ENCODE measurements at regions of chr9 and their contacts with region 1.

Region 1: DNA sequence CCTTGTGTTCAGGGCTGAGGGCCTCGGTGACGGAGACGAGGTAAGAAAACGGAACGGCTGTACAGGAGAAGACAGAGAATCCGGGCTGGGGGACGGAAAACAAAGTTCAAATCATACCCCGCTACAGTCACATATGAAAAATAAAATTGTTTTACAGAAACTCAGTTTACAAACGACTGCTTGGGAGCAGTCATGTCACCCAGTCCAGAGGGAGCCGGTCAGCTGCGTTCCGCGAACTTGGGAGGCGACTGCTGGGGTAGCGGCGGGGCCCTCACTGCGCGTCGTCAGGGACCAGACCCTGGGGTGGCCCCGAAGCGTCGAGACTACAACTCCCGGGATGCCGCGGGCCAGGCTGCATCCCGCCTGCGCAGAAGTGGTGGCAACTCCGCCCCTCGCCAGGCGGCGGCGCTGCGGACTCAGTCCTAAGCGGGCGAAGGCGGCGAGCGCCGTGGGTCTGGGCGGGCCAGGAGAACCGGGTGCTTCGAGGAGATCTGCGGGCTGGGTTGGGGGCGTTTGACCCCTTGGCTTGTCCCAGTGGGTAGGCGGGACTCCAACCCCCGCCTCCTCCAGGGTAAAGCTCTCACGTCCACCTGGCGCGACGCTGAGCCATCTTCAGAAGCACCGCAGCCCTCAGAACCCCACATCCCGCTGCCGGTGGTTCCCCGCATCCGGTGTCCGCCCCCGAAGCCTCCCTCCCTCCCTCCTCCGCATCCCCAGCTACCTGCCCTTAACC is 4.0 kb downstream of the SIT1 start:
- DNase-seq: peak; percentile 97
- ATAC-seq: peak; percentile 83
- H3K4me3 Mint-ChIP-seq: peak overlapping the region; percentile 97
- H3K27ac Mint-ChIP-seq: peak overlapping the region; percentile 96
- H3K4me1 Mint-ChIP-seq: peaks cover 67% of the 10 kb centered on the region
- H3K27me3 Mint-ChIP-seq: no peaks in the 10 kb centered on the region

Region 2: GRCh38 chr9:35603987-35604577 is 42.6 kb before region 1 on chr9:
- CTCF ChIA-PET with region 1: interaction called, 47 read pairs
- POLR2A ChIA-PET with region 1: interaction called, 22 read pairs
- DNase-seq: peak; percentile 100
- ATAC-seq: peak; percentile 88
- H3K4me3 Mint-ChIP-seq: peak overlapping the region; percentile 90
- H3K27ac Mint-ChIP-seq: peak overlapping the region; percentile 96
- H3K4me1 Mint-ChIP-seq: peaks cover 37% of the 10 kb centered on the region
- H3K27me3 Mint-ChIP-seq: no peaks in the 10 kb centered on the region

Region 3: GRCh38 chr9:35616681-35617459 is 29.8 kb before region 1 on chr9:
- CTCF ChIA-PET with region 1: interaction called, 272 read pairs
- POLR2A ChIA-PET with region 1: interaction called, 122 read pairs
- DNase-seq: peak; percentile 78
- ATAC-seq: peak; percentile 65
- H3K4me3 Mint-ChIP-seq: peak overlapping the region; percentile 79
- H3K27ac Mint-ChIP-seq: peak overlapping the region; percentile 92
- H3K4me1 Mint-ChIP-seq: peaks cover 62% of the 10 kb centered on the region
- H3K27me3 Mint-ChIP-seq: no peaks in the 10 kb centered on the region

Region 4: DNA sequence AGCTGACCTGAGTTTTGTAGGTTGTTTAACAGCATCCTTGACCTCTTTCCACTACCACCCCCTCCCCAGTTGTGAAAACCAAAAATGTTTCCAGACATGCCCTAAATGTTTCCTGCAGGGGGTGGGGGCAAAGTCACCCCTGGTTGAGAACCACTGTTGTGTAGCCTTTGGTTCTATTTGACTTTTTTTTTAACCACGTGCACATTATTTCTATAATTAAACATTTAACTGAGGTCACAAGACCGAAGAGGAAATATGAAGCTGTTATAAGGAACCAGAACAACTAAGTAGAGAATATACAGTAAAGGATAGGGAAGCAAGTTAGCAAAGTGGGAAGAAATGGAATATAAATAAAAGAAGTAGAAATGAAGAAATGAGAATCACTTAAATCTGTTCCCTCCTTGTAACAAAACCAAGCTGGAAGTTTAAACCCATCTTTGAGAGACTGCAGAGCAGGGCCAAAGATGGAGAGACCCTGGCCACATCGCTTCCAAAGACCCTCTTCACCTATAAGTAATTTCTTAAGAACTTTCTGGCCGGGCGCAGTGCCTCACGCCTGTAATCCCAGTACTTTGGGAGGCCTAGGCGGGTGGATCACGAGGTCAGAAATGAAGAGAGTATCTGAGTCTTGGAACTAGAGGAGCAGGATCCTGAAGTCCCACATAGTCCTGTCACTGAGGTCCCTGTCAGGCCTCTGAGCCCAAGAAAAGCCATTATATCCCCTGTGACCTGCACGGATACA is 10.4 kb before region 1 on chr9:
- CTCF ChIA-PET with region 1: interaction called, 33 read pairs
- POLR2A ChIA-PET with region 1: interaction called, 9 read pairs
- DNase-seq: no peak
- ATAC-seq: no peak
- H3K4me3 Mint-ChIP-seq: no peak overlapping the region
- H3K27ac Mint-ChIP-seq: no peak overlapping the region
- H3K4me1 Mint-ChIP-seq: peaks cover 56% of the 10 kb centered on the region
- H3K27me3 Mint-ChIP-seq: no peaks in the 10 kb centered on the region

Region 5: DNA sequence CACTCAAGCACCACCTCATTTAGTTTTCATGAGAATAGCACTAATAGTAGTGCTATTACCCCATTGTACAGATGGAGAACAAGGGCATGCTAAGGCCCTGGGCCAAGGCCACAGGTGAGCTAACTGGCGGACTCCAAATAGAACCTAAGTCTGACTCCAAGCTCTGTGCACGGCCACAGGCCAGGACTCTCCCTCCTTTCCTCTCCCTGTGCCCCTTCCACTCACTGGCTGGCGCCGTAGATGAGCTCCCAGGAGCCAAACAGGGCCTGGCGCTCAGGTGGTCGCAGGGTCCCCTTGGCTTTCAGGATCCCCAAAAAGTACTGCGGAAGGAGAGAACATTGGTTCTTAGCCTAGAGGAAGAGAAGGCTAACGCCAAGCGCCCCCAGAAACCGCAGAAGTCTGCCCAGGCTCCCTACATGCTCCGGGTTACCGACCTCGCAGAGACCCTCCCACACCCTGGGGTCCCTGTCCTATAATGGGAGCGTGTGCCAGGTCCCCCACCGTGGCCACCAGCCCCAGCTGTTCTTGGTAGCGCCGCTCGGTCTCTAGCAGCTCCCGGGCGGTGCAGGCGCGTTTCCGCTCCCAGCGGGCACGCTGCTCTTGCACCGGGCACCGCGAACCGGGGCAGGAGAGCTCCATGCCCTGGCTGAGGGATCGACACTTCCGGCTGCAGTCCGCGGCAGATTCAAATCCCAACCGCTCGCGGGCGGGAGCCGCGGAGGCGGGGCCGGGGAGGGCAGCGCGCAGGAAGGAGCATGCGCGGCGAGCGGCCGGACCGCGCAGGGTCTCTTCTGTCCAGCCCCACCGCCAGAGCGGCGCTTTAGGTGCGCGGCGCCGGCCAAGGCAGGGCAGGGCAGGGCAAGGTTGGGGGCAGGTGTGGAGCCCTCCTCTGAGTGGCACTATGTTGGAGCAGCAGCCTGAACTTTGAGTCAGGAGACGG is 18.1 kb after region 1 on chr9 and contains the start of gene ARHGEF39:
- CTCF ChIA-PET with region 1: interaction called, 214 read pairs
- POLR2A ChIA-PET with region 1: interaction called, 54 read pairs
- DNase-seq: peak; percentile 84
- ATAC-seq: peak; percentile 84
- H3K4me3 Mint-ChIP-seq: peak within 1 kb of the TSS; percentile 86
- H3K27ac Mint-ChIP-seq: peak within 1 kb of the TSS; percentile 86
- H3K4me1 Mint-ChIP-seq: peaks cover 68% of the 10 kb centered on the region
- H3K27me3 Mint-ChIP-seq: no peaks in the 10 kb centered on the region
- total RNA-seq, gene ARHGEF39: 17.2 to 17.3 TPM

Region 6: GRCh38 chr9:35748858-35749514 is 102.3 kb after region 1 on chr9 and contains the starts of genes GBA2 and RGP1:
- CTCF ChIA-PET with region 1: interaction called, 11 read pairs
- POLR2A ChIA-PET with region 1: interaction called, 7 read pairs
- DNase-seq: peak; percentile 78
- ATAC-seq: peak; percentile 83
- H3K4me3 Mint-ChIP-seq: peak within 1 kb of the TSS; percentile 90
- H3K27ac Mint-ChIP-seq: peak within 1 kb of the TSS; percentile 87
- H3K4me1 Mint-ChIP-seq: peaks cover 39% of the 10 kb centered on the region
- H3K27me3 Mint-ChIP-seq: no peaks in the 10 kb centered on the region
- total RNA-seq, gene GBA2: 52.6 to 56.4 TPM
- total RNA-seq, gene RGP1: 22.1 to 22.9 TPM

Region 7: DNA sequence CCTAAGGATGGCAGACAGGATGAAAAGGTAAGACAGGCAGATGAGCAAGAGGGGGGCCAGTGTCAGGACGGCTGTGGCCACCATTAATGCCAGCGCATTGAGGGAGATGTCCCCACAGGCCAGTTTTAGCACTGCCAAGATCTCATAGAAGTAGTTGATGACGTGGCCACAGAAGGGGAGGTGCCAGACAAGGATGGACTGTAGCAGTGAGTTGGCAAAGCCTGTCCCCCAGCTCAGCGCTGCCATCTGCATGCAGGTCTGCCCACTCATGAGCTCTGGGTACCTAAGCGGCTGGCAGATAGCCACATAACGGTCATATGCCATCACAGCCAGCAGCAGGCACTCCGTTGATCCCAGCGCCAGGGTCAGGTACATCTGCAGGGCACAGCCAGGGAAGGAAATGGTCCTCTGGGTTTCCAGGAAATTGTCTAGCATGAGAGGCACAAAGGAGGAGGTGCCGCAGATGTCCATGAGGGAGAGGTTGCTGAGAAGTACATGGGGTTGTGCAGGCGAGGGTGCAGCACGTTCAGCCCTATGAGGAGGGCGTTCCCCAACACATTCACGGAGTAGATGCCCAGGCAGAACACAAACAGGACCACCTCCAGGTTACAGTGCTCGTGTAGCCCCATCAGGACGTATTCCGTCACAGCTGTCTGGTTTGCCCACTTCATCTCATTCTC is 212.8 kb after region 1 on chr9:
- CTCF ChIA-PET with region 1: no interaction called
- POLR2A ChIA-PET with region 1: no interaction called
- DNase-seq: peak; percentile 20
- ATAC-seq: no peak
- H3K4me3 Mint-ChIP-seq: no peak overlapping the region
- H3K27ac Mint-ChIP-seq: no peak overlapping the region
- H3K4me1 Mint-ChIP-seq: no peaks in the 10 kb centered on the region
- H3K27me3 Mint-ChIP-seq: peaks cover 21% of the 10 kb centered on the region